ENCODE measurements at regions of chr6 and their contacts with region 1.

Region 1: DNA sequence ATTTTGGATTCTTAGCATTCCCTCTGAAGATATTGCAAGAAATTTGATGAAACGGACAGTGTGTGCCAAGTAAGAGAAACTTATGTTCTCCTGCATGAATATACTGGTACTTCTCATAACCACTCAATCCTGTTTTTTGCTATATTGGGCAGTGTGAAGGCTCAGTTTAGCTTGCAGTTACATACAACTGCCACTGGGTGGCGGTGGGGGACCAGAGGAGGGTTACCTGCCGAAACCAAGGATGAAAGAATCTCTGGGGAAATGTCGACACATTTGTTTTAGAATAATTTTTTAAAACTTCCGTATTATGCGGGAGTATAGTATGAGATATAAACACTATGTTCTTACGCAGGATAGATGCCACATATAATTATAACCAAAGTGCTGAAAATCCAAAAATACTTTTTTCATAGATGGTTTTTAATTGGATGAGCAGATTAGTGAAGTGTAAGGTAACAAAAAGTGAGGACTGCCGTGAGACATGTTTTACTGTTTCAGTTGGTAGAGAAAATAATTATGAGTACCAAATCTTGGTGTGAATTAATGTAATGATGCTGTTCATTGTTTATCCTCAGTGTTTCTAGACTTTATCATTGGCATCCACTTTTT is 9.7 kb downstream of the TRMT11 start:
- DNase-seq: no peak
- H3K4me3 ChIP-seq: no peak overlapping the region
- H3K27me3 ChIP-seq: no peaks in the 10 kb centered on the region
- CTCF ChIP-seq: peak; percentile 95

Region 2: DNA sequence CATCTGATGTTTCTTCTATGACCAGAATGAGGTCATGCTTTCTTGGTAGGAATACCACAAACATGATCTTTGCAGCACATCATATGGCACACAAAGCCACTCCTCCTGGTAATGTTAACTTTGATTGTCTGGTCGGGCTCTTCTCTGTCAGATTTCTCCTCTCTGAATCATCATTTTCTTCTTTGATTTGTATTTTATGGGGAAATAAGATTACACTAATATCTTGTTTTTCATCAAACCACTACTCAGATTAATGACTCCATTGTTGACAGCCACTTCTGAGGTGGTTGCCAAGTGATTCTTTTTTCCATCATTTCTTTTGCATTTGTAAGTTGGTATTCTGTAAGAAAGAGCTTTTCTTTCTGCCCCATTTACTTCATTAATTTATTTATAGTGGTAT is 19.8 kb after region 1 on chr6:
- CTCF ChIA-PET with region 1: interaction called, 13 read pairs
- POLR2A ChIA-PET with region 1: no interaction called
- DNase-seq: no peak
- H3K4me3 ChIP-seq: no peak overlapping the region
- H3K27me3 ChIP-seq: no peaks in the 10 kb centered on the region
- CTCF ChIP-seq: no peak

Region 3: GRCh38 chr6:127120787-127121636 is 1124.9 kb after region 1 on chr6:
- CTCF ChIA-PET with region 1: interaction called, 12 read pairs
- POLR2A ChIA-PET with region 1: no interaction called
- DNase-seq: peak; percentile 10
- H3K4me3 ChIP-seq: no peak overlapping the region
- H3K27me3 ChIP-seq: peaks cover 39% of the 10 kb centered on the region
- CTCF ChIP-seq: peak; percentile 86

Measured in BJ (cell line).